ENCODE measurements at regions of chr3 and their contacts with region 1.

Region 1: DNA sequence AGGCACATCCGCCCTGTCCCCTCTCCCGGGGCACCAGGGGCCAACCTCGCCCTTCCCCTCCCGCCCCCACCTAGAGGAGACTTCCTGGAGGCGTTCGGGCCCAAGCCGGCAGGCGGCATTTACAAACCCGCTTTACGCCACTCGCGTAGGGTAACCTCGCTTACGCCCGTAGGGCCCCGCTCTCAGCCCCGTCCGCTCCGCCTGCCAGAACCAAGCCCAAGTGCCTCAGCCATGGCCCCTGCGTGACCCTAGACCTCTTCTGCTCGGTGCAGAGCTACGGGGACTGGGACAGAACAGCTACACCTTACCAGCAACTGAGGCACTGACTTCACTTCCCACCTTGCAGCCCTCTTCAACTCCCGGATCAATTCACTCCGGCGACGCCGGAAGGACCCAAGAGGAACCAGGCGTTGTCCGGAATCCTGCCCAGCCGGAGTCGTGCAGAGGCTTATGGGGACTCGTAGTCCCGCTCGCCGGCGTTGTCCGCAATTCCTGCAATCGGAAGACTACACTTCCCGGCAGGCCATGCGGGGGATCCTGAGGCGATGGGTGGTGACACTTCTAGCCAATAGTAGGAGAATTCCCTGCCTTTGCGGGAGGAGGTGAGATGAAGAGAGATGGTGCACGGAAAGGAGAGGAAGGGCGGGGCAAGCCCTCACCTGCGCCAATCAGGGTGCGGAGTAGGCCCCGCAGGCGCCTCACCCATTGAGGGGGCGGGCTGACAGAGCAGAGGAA is at the start of gene PDCD10:
- DNase-seq: peak; percentile 97 to 98
- ATAC-seq: peak; percentile 96 to 98 (median 97)
- H3K4me3 ChIP-seq: peak within 1 kb of the TSS; percentile 59 to 96 (median 84)
- H3K27ac ChIP-seq: peak within 1 kb of the TSS; percentile 71 to 96 (median 92)
- H3K4me1 ChIP-seq: peaks cover 0 to 56% (median 47%) of the 10 kb centered on the region in 9 donors
- H3K27me3 ChIP-seq: no peaks in the 10 kb centered on the region
- CTCF ChIP-seq: peak in 1 of 9 donors; percentile 3
- total RNA-seq, gene PDCD10: 28.3 to 44.3 (median 38.1) TPM

Region 2: GRCh38 chr3:167691366-167691765 is 43.3 kb before region 1 on chr3:
- intact Hi-C with region 1: no loop called
- DNase-seq: no peak
- ATAC-seq: no peak
- H3K4me3 ChIP-seq: no peak overlapping the region
- H3K27ac ChIP-seq: no peak overlapping the region
- H3K4me1 ChIP-seq: no peaks in the 10 kb centered on the region
- H3K27me3 ChIP-seq: no peaks in the 10 kb centered on the region
- CTCF ChIP-seq: no peak

Region 3: DNA sequence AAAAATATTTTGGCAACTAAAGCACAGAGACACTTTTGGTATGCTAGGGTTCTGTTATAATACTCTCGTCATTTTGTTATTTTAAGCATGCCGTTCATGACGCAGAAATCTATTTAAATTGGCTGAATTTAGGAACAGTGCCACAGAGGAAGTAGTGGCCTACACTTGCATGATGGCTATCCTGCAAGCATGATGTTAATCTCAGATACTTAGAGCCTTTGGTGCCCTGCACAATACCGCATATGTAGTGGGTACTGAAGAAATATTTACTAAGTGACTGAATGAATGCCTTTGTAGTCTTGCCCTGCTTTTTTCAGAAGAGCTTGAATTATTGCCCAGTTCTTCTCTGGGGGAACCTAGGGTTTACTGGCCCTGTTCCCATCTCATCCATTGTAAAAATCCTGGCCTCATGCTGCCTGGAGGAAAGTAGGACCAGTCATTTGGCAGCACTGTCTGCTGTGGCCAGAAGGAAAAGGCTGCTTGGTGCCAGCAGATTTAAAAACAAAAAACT is 79.8 kb after region 1 on chr3:
- intact Hi-C with region 1: loop called in 6 of 10 experiments (anchors 2 to 10 kb)
- DNase-seq: peak in 1 of 2 donors; percentile 70
- ATAC-seq: peak; percentile 85 to 96 (median 94)
- H3K4me3 ChIP-seq: peak overlapping the region in 2 of 10 donors; percentile 2 to 5
- H3K27ac ChIP-seq: peak overlapping the region in 9 of 10 donors; percentile 33 to 89 (median 75)
- H3K4me1 ChIP-seq: peaks cover 16 to 57% (median 37%) of the 10 kb centered on the region in 9 donors
- H3K27me3 ChIP-seq: no peaks in the 10 kb centered on the region
- CTCF ChIP-seq: peak in 3 of 9 donors; percentile 7 to 31 (median 20)

Measured in heart right ventricle (tissue), 16 donors.